Activated CD8-positive, alpha-beta T cell treated with anti-CD3 and anti-CD28 coated beads, Interleukin-2, amount 10 ng/mL, durations not matched to agents 7 days and 5 days (primary cell): ENCODE measurements at regions of chr20 and their contacts with region 1.

Region 1: GRCh38 chr20:50569864-50570836 is 60.0 kb downstream of the PTPN1 start:
- DNase-seq: peak; percentile 62
- ATAC-seq: peak; percentile 81
- H3K4me3 Mint-ChIP-seq: no peak overlapping the region
- H3K27ac Mint-ChIP-seq: peak overlapping the region; percentile 85
- H3K4me1 Mint-ChIP-seq: peaks cover 49% of the 10 kb centered on the region
- H3K27me3 Mint-ChIP-seq: no peaks in the 10 kb centered on the region

Region 2: DNA sequence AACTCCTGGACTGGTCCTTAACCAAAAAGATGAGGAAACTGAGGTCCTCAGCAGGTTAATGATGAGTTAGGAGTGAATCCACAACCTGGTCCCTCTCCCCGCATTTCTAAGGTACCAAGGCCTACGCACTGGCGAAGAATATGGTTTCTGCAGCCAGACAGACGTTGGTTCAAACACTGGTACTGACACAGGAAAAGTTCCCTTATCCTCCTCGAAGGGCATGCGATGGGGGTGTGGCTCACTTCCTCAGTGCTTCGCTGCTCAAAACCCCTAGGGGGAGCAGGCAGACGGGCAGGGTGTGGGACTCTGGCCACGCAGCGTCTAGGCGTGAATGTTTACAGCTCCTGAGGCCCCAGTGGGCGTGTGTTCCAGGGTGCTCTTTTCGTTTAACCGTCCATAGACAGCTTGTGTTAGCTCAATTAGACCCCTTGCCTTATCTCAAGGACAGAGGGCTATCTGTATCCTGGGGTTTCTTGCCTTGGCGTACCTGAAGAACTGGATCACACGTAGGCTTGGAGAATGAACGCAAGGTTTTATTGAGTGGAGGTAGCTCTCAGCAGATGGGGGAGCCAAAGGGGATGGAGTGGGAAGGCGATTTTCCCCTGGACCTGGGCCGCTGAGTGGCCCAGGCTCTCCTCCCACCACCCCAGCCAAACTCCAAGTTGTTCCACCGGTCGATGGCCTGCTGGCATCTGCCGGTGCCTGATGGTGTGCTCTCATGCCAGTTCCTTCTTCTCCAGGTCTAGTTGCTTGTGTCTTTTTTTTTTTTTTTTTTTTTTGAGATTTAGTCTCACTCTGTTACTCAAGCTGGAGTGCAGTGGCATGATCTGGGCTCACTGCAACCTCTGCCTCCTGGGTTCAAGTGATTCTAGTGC is 91.8 kb before region 1 on chr20:
- CTCF ChIA-PET with region 1: interaction called, 33 read pairs
- POLR2A ChIA-PET with region 1: interaction called, 7 read pairs
- DNase-seq: peak; percentile 86
- ATAC-seq: peak; percentile 100
- H3K4me3 Mint-ChIP-seq: no peak overlapping the region
- H3K27ac Mint-ChIP-seq: no peak overlapping the region
- H3K4me1 Mint-ChIP-seq: peaks cover 36% of the 10 kb centered on the region
- H3K27me3 Mint-ChIP-seq: peaks cover 2% of the 10 kb centered on the region

Region 3: GRCh38 chr20:50484276-50484976 is 85.7 kb before region 1 on chr20:
- CTCF ChIA-PET with region 1: interaction called, 33 read pairs
- POLR2A ChIA-PET with region 1: interaction called, 7 read pairs
- DNase-seq: no peak
- ATAC-seq: no peak
- H3K4me3 Mint-ChIP-seq: peak overlapping the region; percentile 81
- H3K27ac Mint-ChIP-seq: peak overlapping the region; percentile 94
- H3K4me1 Mint-ChIP-seq: peaks cover 46% of the 10 kb centered on the region
- H3K27me3 Mint-ChIP-seq: no peaks in the 10 kb centered on the region

Region 4: DNA sequence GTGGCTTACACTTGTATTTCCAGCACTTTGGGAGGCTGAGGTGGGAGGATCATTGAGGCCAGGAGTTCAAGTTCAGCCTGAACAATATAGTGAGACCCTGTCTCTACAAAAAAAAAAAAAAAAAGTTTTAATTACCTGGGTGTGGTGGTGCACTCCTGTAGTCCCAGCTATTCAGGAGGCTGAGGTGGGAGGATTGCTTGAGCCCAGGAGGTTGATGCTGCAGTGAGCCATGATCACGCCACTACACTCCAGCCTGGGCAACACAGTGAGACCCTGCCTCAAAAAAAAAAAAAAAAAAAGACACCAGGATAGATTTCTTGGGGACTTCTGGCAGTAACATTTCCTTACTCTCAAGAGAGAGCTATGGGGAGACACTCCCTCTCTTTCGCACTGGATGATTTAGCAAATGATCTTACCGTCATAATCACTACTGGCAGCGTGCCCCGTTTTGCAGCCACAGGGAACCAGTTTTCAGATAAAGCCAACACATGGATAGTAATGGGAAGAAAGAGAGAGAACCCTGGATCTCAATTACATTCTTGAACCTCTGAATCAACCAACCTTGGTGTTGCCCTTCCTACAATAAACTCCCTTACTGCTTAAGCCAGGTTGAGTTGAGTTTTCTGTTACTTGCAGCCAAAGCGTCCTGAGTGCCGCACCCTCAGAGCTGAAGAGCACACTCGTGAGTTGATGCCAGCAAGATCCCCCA is 78.1 kb before region 1 on chr20:
- CTCF ChIA-PET with region 1: interaction called, 14 read pairs
- POLR2A ChIA-PET with region 1: no interaction called
- DNase-seq: no peak
- ATAC-seq: no peak
- H3K4me3 Mint-ChIP-seq: no peak overlapping the region
- H3K27ac Mint-ChIP-seq: no peak overlapping the region
- H3K4me1 Mint-ChIP-seq: peaks cover 15% of the 10 kb centered on the region
- H3K27me3 Mint-ChIP-seq: peaks cover 6% of the 10 kb centered on the region

Region 5: DNA sequence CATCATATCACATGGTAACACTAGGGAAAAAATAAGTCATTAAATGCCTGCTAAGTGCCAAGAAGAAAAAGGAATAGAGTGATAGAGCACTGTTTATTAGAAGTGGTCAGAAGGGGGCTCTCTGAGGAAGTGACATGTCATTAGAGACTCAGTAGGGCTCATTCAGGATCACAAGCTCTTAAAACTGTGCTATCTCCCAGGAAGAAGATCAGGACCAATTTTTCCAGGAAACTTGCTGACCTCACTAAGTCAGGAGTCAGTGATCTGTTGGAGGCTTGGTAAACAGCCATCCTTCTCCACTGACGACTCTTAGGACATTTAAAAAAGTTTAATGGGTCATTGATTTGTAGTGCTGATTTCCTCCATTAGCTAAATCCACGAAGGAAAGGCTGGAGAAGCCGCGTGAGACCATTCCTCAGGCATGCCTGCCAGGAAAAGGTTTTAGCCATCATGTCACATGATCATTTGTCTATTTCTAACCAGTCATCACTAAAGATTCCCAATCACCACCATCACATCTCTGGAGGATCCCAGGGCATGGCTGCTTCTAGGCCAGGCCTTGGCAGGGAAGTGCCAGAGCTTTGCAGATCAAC is 65.8 kb before region 1 on chr20:
- CTCF ChIA-PET with region 1: interaction called, 158 read pairs
- POLR2A ChIA-PET with region 1: no interaction called
- DNase-seq: no peak
- ATAC-seq: no peak
- H3K4me3 Mint-ChIP-seq: no peak overlapping the region
- H3K27ac Mint-ChIP-seq: no peak overlapping the region
- H3K4me1 Mint-ChIP-seq: peaks cover 18% of the 10 kb centered on the region
- H3K27me3 Mint-ChIP-seq: no peaks in the 10 kb centered on the region

Region 6: GRCh38 chr20:50516180-50516934 is 53.8 kb before region 1 on chr20:
- CTCF ChIA-PET with region 1: interaction called, 158 read pairs
- POLR2A ChIA-PET with region 1: interaction called, 10 read pairs
- DNase-seq: no peak
- ATAC-seq: peak; percentile 9
- H3K4me3 Mint-ChIP-seq: peak overlapping the region; percentile 72
- H3K27ac Mint-ChIP-seq: peak overlapping the region; percentile 91
- H3K4me1 Mint-ChIP-seq: peaks cover 93% of the 10 kb centered on the region
- H3K27me3 Mint-ChIP-seq: no peaks in the 10 kb centered on the region